ENCODE measurements at regions of chr2 and their contacts with region 1.

Region 1: DNA sequence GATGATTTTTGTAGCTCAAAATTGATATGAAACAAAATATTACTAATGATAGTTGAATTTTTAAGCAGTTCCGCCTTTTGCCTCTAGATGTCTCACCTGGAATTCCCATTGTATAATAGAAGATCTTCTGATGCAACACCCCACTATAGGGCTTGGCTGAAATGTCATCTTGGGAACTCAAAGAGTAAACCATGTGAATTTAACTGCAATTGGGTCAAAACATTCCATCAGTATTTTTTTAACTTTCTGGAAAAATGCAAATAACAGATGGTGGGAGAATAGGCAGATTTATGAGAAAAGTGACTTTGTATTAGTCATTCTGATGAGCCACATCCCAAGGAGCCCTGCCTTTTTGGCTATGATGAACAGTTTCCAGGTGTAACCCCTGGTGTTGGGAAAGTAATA is 489.9 kb downstream of the NYAP2 start:
- DNase-seq: no peak
- ATAC-seq: peak; percentile 63 to 64
- H3K4me3 ChIP-seq: no peak overlapping the region
- H3K27ac ChIP-seq: no peak overlapping the region
- H3K4me1 ChIP-seq: no peaks in the 10 kb centered on the region
- H3K27me3 ChIP-seq: no peaks in the 10 kb centered on the region
- CTCF ChIP-seq: peak; percentile 69

Region 2: GRCh38 chr2:225989809-225990208 is 100.4 kb after region 1 on chr2:
- intact Hi-C with region 1: no loop called
- DNase-seq: no peak
- ATAC-seq: no peak
- H3K4me3 ChIP-seq: no peak overlapping the region
- H3K27ac ChIP-seq: no peak overlapping the region
- H3K4me1 ChIP-seq: no peaks in the 10 kb centered on the region
- H3K27me3 ChIP-seq: no peaks in the 10 kb centered on the region
- CTCF ChIP-seq: no peak

Region 3: GRCh38 chr2:226179012-226179411 is 289.6 kb after region 1 on chr2:
- intact Hi-C with region 1: no loop called
- DNase-seq: no peak
- ATAC-seq: no peak
- H3K4me3 ChIP-seq: no peak overlapping the region
- H3K27ac ChIP-seq: no peak overlapping the region
- H3K4me1 ChIP-seq: no peaks in the 10 kb centered on the region
- H3K27me3 ChIP-seq: no peaks in the 10 kb centered on the region
- CTCF ChIP-seq: no peak

Region 4: DNA sequence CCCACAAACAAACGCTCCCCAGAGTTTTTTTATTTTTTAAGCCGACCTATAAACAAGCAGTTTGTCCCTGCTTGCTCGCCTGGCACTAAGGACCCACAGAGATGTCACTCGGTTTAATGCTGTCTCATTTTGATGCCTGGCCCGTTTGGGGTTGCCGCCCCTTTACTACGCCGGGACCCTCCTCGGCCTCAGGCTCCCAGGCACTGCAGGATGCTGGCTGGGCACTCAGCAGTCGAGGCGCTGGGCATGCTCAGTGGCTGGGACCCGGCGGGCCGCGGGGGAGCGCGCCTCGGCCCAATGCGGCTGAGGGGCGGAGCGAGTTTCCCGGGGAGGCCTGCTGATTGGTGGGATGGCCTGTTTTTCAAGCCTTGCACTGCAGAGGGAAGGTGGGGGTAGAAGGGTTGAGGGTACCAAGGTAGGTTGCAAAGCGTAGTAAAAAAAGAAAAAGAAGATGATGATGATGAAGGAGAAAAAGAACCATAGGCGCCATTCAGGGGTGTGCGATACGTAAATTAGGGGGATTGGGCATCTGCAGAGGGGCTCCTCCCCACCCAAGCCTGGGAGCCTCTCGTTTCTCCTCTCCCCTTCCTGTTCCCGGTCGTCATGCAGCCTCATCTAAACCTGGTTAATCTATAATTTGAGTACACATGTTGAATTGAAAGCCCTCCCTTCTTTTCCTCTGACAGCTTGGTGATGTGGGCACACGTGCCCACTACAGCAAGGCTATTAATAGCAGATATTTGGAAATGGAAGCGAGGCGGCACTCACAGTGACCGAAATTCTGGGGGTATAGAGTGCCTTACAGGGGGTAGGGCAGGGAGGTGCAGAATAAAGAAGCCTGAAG is 911.7 kb after region 1 on chr2:
- intact Hi-C with region 1: loop called (anchors 5 kb)
- DNase-seq: peak; percentile 84
- ATAC-seq: peak; percentile 84
- H3K4me3 ChIP-seq: peak overlapping the region; percentile 77
- H3K27ac ChIP-seq: peak overlapping the region; percentile 76
- H3K4me1 ChIP-seq: peaks cover 42% of the 10 kb centered on the region
- H3K27me3 ChIP-seq: peaks cover 10% of the 10 kb centered on the region
- CTCF ChIP-seq: no peak